ENCODE measurements at regions of chr1 and their contacts with region 1.

Region 1: DNA sequence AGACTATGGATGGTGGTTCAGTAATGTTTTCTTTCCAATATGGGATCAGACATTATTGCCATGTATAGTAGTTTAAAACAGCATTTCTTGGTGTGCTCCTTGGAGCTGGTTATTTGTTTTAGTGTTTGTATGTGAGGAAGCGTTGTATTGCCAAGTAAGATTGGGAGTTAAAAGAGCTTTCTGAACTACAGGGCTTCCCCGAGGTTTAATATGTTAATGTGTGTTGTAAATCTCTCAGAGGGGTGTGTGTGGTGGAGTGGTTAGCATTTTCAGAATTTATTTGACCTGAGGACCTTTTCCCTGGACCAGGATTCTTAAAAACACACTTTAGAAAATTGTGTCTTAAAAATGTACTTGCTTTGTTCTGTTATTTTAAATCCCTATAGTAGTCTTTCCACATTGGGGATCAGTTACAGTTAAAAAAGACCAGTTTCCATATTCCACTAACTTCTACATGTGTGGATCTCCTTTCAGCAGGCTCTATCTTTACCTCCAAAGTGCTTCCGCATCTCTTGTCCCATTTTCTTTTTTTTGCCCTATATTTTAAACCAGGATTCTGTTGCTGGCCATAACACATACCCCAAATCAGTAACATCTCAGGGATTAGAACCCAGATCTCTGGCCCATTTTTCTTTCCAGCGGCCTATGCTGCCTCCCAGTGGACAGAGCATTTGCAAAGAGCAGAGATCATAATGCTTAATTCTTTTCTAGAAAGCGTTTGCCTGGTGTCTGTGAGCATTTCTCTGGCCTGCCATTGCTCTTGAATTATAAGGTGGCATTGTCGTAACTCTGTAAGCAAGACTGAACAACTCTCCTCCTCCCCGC is 58.6 kb downstream of the PBX1 start:
- DNase-seq: no peak
- H3K4me3 ChIP-seq: no peak overlapping the region
- H3K27ac ChIP-seq: peak overlapping the region; percentile 46 to 73 (median 62)
- H3K4me1 ChIP-seq: peaks cover 0 to 97% (median 93%) of the 10 kb centered on the region in 4 donors
- H3K27me3 ChIP-seq: no peaks in the 10 kb centered on the region
- CTCF ChIP-seq: peak; percentile 22 to 63 (median 52)
- EP300 ChIP-seq: no peak
- POLR2A ChIP-seq: no peak

Region 2: DNA sequence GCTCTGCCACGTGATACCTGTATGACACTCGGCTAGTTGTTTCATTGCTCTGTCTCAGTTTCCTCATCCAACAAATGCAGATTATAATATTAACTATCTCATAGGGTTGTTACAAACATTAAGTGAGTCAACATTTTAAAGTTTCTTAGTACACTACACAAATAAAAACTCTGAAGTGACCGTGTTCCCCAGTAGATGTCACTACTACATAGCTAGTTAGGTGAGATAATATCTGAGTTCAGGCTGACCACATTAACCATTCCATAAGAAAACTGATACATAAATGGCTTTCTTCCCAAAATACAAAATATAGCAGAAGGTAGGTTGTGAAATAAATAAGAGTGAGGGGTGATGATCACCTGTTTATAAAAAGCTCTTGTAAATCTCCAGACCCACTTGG is 1081.8 kb before region 1 on chr1:
- intact Hi-C with region 1: loop called (anchors 5 kb)
- DNase-seq: no peak
- H3K4me3 ChIP-seq: no peak overlapping the region
- H3K27ac ChIP-seq: no peak overlapping the region
- H3K4me1 ChIP-seq: peaks cover 0 to 22% (median 20%) of the 10 kb centered on the region in 4 donors
- H3K27me3 ChIP-seq: no peaks in the 10 kb centered on the region
- CTCF ChIP-seq: peak in 3 of 4 experiments; percentile 6 to 29 (median 10)
- EP300 ChIP-seq: no peak
- POLR2A ChIP-seq: no peak

Region 3: GRCh38 chr1:164443166-164443565 is 174.4 kb before region 1 on chr1:
- intact Hi-C with region 1: no loop called
- DNase-seq: no peak
- H3K4me3 ChIP-seq: no peak overlapping the region
- H3K27ac ChIP-seq: no peak overlapping the region
- H3K4me1 ChIP-seq: peaks cover 0 to 12% (median 10%) of the 10 kb centered on the region in 4 donors
- H3K27me3 ChIP-seq: no peaks in the 10 kb centered on the region
- CTCF ChIP-seq: no peak
- EP300 ChIP-seq: no peak
- POLR2A ChIP-seq: no peak

Region 4: DNA sequence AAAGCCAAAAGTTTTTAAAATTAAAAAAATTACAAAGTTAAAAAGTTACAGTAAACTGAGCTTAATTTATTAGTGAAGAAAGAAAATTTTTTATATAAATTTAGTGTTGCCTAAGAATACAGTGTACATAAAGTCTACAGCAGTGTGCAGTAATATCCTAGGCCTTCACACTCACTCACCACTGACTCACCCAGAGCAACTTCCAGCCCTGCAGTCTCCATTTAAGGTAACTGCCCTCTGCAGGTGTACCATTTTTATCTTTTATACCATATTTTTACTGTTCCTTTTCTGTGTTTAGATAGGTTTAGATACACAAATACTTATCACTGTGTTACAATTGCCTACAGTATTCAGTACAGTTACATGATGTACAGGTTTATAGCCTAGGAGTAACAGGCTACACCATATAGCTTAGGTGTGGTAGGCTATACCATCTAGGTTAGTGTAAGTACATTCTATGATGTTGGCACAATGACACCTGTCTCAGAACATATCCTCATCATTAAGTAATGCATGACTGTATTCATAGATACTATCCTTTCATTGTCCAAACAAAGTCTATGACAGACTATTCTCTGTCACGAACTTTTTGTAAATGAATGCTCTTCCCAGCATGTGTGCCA is 137.2 kb before region 1 on chr1:
- intact Hi-C with region 1: no loop called
- DNase-seq: no peak
- H3K4me3 ChIP-seq: no peak overlapping the region
- H3K27ac ChIP-seq: no peak overlapping the region
- H3K4me1 ChIP-seq: no peaks in the 10 kb centered on the region
- H3K27me3 ChIP-seq: no peaks in the 10 kb centered on the region
- CTCF ChIP-seq: no peak
- EP300 ChIP-seq: no peak
- POLR2A ChIP-seq: no peak

Region 5: GRCh38 chr1:164565357-164565756 is 52.2 kb before region 1 on chr1:
- intact Hi-C with region 1: loop called (anchors 1 kb)
- DNase-seq: no peak
- H3K4me3 ChIP-seq: peak overlapping the region; percentile 67 to 90 (median 84)
- H3K27ac ChIP-seq: peak overlapping the region; percentile 82 to 94 (median 88)
- H3K4me1 ChIP-seq: peaks cover 0 to 54% (median 37%) of the 10 kb centered on the region in 4 donors
- H3K27me3 ChIP-seq: no peaks in the 10 kb centered on the region
- CTCF ChIP-seq: no peak
- EP300 ChIP-seq: no peak
- POLR2A ChIP-seq: no peak

Region 6: GRCh38 chr1:164823486-164824279 is 206.1 kb after region 1 on chr1:
- intact Hi-C with region 1: no loop called
- DNase-seq: peak; percentile 89
- H3K4me3 ChIP-seq: no peak overlapping the region
- H3K27ac ChIP-seq: peak overlapping the region; percentile 69 to 85 (median 80)
- H3K4me1 ChIP-seq: peaks cover 0 to 58% (median 56%) of the 10 kb centered on the region in 4 donors
- H3K27me3 ChIP-seq: no peaks in the 10 kb centered on the region
- CTCF ChIP-seq: peak in 3 of 4 experiments; percentile 10 to 34 (median 14)
- EP300 ChIP-seq: peak; percentile 72 to 93 (median 89)
- POLR2A ChIP-seq: no peak

Region 7: GRCh38 chr1:165129568-165130164 is 512.1 kb after region 1 on chr1:
- intact Hi-C with region 1: no loop called
- DNase-seq: no peak
- H3K4me3 ChIP-seq: no peak overlapping the region
- H3K27ac ChIP-seq: no peak overlapping the region
- H3K4me1 ChIP-seq: no peaks in the 10 kb centered on the region
- H3K27me3 ChIP-seq: peaks cover 0 to 22% (median 0%) of the 10 kb centered on the region in 3 donors
- CTCF ChIP-seq: peak in 1 of 4 experiments; percentile 24
- EP300 ChIP-seq: no peak
- POLR2A ChIP-seq: no peak

Measured in sigmoid colon (tissue), 7 donors.